PC-9 (cell line): ENCODE measurements at regions of chr16 and their contacts with region 1.

Region 1: GRCh38 chr16:81035398-81035974 is at the start of gene ATMIN:
- DNase-seq: peak; percentile 76 to 85
- H3K4me3 ChIP-seq: peak within 1 kb of the TSS; percentile 91
- H3K27ac ChIP-seq: peak within 1 kb of the TSS; percentile 24; the same call in 1 of the 2 replicates
- H3K4me1 ChIP-seq: peaks cover 16% of the 10 kb centered on the region
- H3K27me3 ChIP-seq: no peaks in the 10 kb centered on the region
- CTCF ChIP-seq: peak; percentile 84
- total RNA-seq, gene ATMIN: 17.8 and 31.2 TPM in 2 replicates

Region 2: DNA sequence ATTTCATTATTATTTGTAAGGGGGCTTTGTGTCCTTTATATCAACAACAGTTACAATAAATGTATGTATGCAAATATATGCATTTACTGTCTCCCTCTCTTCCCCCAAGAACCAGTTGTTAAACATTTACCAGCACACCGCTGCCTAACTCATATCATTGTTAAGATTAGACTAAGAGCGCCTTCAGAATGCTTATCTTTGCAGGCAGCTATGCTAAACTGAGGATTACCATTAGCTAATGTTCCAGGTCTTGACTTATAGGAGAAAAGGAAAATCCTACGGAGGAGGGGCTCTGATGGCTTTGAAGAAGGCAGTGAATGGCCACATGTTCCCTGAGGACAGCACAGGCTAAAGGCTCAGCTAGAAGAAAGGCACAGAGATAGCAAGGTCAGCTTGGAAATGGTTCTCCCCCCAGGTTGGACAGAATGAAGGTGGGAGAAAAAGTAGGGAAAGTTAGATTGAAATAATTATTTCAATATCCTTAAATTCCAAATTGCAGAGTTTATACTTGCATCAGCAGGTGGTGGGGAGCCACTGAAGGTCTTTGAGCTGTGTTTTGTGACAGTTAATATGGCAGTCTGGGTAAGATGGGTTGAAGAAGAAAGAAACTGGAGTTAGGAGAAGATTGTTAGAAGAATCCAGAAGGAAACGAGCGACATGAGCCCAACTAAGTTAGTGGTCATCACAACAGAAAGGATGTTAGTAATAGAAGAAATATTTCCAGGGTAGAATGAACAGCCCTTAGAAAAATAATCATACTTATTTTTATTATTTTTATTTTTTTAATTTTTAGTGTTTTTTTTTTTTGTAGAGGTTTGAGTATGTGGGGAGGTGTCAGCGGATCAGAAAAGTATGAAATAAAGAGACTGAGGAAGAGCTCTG is 1348.0 kb before region 1 on chr16:
- CTCF ChIA-PET with region 1: no interaction called
- POLR2A ChIA-PET with region 1: no interaction called
- intact Hi-C with region 1: no loop called
- DNase-seq: no peak
- H3K4me3 ChIP-seq: no peak overlapping the region
- H3K27ac ChIP-seq: no peak overlapping the region
- H3K4me1 ChIP-seq: no peaks in the 10 kb centered on the region
- H3K27me3 ChIP-seq: 0 out of 2 replicates have a peak, but pooled peaks cover 4% of the 10 kb centered on the region
- CTCF ChIP-seq: no peak

Region 3: GRCh38 chr16:81127051-81127450 is 91.6 kb after region 1 on chr16:
- CTCF ChIA-PET with region 1: no interaction called
- POLR2A ChIA-PET with region 1: no interaction called
- intact Hi-C with region 1: no loop called
- DNase-seq: peak; percentile 71 to 95
- H3K4me3 ChIP-seq: no peak overlapping the region
- H3K27ac ChIP-seq: peak overlapping the region; percentile 52; the same call in 1 of the 2 replicates
- H3K4me1 ChIP-seq: peaks cover 16% of the 10 kb centered on the region
- H3K27me3 ChIP-seq: no peaks in the 10 kb centered on the region
- CTCF ChIP-seq: no peak

Region 4: DNA sequence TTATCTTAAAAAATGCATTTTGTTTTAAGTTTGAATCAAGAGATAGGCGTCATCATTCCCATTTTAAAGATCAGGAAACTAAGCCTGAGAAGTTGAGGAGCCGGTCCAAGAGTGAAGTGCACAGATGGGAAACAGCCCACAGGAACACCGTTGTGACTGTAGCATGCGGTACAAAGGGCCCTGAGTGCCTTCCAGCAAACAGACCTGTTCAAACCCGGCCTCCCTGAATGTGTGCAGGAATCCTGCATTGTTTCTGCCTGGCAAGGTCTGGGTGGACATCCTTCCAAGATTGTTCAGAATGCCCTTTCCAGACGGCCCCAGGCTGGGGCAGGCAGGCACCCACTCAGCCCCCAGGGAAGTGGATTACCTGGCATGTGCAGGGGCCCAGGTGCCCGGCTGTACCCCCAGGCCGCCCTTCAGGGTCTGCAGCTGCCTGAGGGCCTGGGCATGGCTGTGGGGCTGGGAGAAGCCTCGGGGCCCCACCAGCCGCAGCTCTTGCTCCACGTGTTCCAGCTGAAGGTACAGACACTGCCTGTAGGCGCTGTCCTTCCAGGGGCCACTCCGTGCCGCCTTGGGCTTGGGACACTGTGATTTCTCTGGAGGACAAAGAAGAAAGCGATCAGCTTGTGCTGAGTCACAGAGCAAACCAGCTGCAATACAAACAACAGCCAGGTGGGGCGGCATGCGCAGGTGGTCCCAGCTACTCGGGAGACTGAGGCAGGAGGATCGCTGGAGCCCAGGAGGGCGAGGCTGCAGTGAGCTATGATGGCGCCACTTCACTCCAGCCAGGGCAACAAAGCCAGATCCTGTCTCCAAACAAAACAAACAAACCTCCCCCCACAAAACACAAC is 105.7 kb after region 1 on chr16:
- CTCF ChIA-PET with region 1: no interaction called
- POLR2A ChIA-PET with region 1: no interaction called
- intact Hi-C with region 1: loop called (anchors 5 kb)
- DNase-seq: peak in 1 of 2 experiments; percentile 19
- H3K4me3 ChIP-seq: no peak overlapping the region
- H3K27ac ChIP-seq: peak overlapping the region; percentile 98
- H3K4me1 ChIP-seq: peaks cover 58% of the 10 kb centered on the region
- H3K27me3 ChIP-seq: no peaks in the 10 kb centered on the region
- CTCF ChIP-seq: peak; percentile 58

Region 5: DNA sequence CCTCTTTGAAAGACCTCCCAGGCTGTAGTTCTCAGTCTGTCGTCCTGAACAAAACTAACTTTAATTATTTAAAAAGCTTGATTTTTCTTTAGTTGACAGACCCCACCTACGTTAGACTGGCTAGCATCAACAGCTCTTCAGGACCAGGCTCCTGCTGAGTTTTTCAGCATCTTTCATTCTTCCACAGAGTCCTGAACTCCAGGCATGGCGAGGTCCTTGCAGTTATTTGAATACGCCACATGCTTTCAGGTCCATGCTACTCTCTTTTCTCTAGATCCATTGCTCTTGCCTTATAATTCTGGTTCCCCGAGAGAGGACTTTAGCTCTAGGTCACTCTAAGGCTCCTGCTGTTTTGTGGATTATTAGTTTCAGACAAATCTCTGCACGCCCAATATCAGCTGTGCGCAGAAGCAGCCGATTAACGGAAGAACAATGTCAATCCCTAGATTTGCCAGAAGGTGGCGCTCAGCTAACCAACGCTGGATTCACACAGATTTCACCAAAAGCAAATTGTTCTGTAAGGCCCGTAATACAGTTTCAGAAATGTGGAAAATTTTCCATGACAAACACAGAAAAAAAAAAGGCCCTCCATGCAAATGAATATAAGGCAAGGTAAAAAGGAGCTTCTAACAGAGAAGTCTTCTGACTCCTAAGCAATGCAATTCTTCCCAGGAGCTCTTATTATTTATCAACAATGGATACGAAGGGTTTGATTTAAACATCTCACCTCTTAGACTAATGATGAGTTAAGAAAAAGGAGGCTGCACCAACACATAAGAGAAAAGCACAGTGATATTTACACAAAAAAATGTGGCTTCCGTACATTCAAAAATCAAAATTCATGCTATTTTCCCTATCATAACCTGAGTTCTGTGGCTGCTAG is 169.6 kb after region 1 on chr16:
- CTCF ChIA-PET with region 1: interaction called, 10 read pairs
- POLR2A ChIA-PET with region 1: no interaction called
- intact Hi-C with region 1: no loop called
- DNase-seq: no peak
- H3K4me3 ChIP-seq: no peak overlapping the region
- H3K27ac ChIP-seq: no peak overlapping the region
- H3K4me1 ChIP-seq: no peaks in the 10 kb centered on the region
- H3K27me3 ChIP-seq: no peaks in the 10 kb centered on the region
- CTCF ChIP-seq: peak; percentile 86

Region 6: GRCh38 chr16:81314603-81315270 is 279.3 kb after region 1 on chr16 and contains the start of gene GAN:
- CTCF ChIA-PET with region 1: no interaction called
- POLR2A ChIA-PET with region 1: no interaction called
- intact Hi-C with region 1: loop called (anchors 2 kb)
- DNase-seq: peak; percentile 88 to 93
- H3K4me3 ChIP-seq: peak within 1 kb of the TSS; percentile 67
- H3K27ac ChIP-seq: no peak within 1 kb of the TSS
- H3K4me1 ChIP-seq: peaks cover 44% of the 10 kb centered on the region
- H3K27me3 ChIP-seq: no peaks in the 10 kb centered on the region
- CTCF ChIP-seq: no peak
- total RNA-seq, gene GAN: 11.9 TPM in 2 replicates

Region 7: DNA sequence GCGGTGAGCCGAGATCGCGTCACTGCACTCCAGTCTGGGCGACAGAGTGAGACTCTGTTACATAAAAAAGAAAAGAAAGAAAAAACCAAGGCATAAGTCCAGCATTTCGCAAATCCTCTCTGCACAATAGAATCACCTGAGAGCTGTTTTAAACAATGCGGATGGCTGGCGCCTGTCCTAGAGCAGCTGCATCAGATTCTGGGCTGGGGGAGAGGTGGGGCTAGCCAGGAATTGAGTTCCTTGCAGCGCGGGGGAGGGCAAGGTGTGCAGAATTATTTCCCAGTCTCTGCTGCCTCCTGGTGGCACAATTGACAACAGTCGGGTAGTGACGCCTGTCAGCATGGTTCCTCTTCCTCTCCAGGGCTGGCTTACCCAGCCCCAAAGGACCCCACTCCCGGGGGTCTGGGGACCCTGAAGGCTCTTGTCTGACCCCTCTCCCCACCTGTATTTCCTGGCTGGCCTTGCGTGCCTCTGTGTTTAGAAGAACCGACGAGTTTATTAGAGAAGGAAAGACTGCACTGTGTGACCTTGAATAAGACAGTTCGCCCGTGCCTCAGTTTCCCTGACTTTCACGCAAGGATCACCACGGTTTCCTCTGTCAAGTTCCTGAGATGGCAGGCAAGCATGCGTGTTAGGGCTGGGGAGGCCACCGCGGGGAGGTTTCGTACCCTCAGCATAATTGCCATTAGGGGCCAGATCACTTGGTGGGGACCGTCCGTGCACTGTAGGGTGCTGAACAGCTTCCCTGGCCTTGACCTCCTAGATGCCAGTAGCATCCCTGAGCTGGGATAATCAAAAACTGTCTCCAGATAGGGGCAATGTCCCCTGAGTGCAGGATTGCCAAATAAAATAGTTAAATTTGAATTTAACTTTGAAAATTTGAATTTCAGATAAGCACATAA is 702.6 kb after region 1 on chr16:
- CTCF ChIA-PET with region 1: no interaction called
- POLR2A ChIA-PET with region 1: no interaction called
- intact Hi-C with region 1: loop called (anchors 5 kb)
- DNase-seq: peak; percentile 86 to 91
- H3K4me3 ChIP-seq: no peak overlapping the region
- H3K27ac ChIP-seq: no peak overlapping the region
- H3K4me1 ChIP-seq: no peaks in the 10 kb centered on the region; the same call in 1 of the 2 replicates
- H3K27me3 ChIP-seq: no peaks in the 10 kb centered on the region
- CTCF ChIP-seq: peak; percentile 91